GM12878 (cell line): ENCODE measurements at regions of chr6 and their contacts with region 1.

Region 1: GRCh38 chr6:2931970-2932748 is 29.1 kb upstream of the SERPINB9 start:
- DNase-seq: peak; percentile 60
- ATAC-seq: peak; percentile 99
- H3K4me3 ChIP-seq: no peak overlapping the region
- H3K27ac ChIP-seq: no peak overlapping the region
- H3K4me1 ChIP-seq: peaks cover 6% of the 10 kb centered on the region
- H3K27me3 ChIP-seq: peaks cover 0 to 4% of the 10 kb centered on the region in 2 experiments; a peak in 1 of 4 replicates
- CTCF ChIP-seq: peak; percentile 97 to 98 (median 97); a peak in 5 of 6 replicates
- EP300 ChIP-seq: no peak
- POLR2A ChIP-seq: no peak
- RAD21 ChIP-seq: peak; percentile 95

Region 2: DNA sequence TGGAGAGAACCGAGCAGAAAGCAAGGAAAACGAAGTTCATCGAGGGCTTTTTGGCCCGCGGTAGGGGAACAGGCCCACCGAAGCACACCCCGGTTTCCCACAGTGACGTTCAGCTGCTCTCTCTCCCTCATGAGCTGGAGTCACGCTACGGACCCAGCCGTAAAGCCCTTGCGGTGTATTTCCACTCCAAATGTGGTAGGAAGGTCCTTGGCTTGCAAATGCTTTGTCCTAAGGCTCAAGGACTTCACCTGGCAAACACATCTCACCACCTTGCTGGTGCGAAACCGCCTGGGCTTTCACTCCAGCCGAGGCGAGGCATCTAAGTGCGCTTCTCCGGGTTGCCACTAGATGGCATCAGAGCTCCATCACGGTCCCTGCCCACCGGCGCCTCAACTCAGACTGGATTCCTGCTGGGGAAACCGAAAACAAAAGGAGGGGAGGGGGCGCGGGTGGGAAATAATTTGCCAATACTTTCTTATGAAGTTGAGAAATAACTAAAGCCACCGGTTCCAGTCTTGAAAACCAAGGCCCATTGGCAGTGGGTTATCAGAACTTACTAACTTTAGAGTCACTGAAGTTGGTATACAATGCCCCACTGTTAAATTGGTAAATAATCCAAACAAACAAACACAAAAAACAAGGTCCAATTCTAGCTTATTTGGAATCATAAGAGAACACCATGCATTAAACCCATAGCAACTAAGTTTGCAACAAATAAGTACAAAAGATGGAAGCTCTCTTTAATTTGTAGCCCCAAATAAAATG is 1335.9 kb before region 1 on chr6:
- CTCF ChIA-PET with region 1: no interaction called
- POLR2A ChIA-PET with region 1: no interaction called
- RAD21 ChIA-PET with region 1: no interaction called
- SMC1A ChIA-PET with region 1: no interaction called
- in situ Hi-C with region 1: loop called (anchors 25 kb)
- intact Hi-C with region 1: no loop called
- DNase-seq: no peak
- ATAC-seq: peak; percentile 96
- H3K4me3 ChIP-seq: no peak overlapping the region
- H3K27ac ChIP-seq: no peak overlapping the region
- H3K4me1 ChIP-seq: no peaks in the 10 kb centered on the region
- H3K27me3 ChIP-seq: no peaks in the 10 kb centered on the region; a peak in 2 of 4 replicates
- CTCF ChIP-seq: peak; percentile 92 to 93 (median 93)
- EP300 ChIP-seq: no peak
- POLR2A ChIP-seq: no peak
- RAD21 ChIP-seq: peak; percentile 90

Region 3: GRCh38 chr6:2658788-2659187 is 273.4 kb before region 1 on chr6:
- CTCF ChIA-PET with region 1: no interaction called
- POLR2A ChIA-PET with region 1: no interaction called
- RAD21 ChIA-PET with region 1: no interaction called
- SMC1A ChIA-PET with region 1: no interaction called
- in situ Hi-C with region 1: no loop called
- intact Hi-C with region 1: no loop called
- DNase-seq: peak; percentile 40
- ATAC-seq: peak; percentile 92
- H3K4me3 ChIP-seq: no peak overlapping the region
- H3K27ac ChIP-seq: no peak overlapping the region
- H3K4me1 ChIP-seq: peaks cover 10% of the 10 kb centered on the region
- H3K27me3 ChIP-seq: no peaks in the 10 kb centered on the region
- CTCF ChIP-seq: no peak
- EP300 ChIP-seq: peak in 1 of 2 experiments; percentile 57; a peak in 1 of 4 replicates
- POLR2A ChIP-seq: no peak
- RAD21 ChIP-seq: no peak

Region 4: GRCh38 chr6:2784930-2785329 is 147.2 kb before region 1 on chr6:
- CTCF ChIA-PET with region 1: interaction called, 80 read pairs
- POLR2A ChIA-PET with region 1: no interaction called
- RAD21 ChIA-PET with region 1: interaction called, 74 read pairs
- SMC1A ChIA-PET with region 1: interaction called, 26 read pairs
- in situ Hi-C with region 1: loop called (anchors 5 kb)
- intact Hi-C with region 1: no loop called
- DNase-seq: no peak
- ATAC-seq: no peak
- H3K4me3 ChIP-seq: no peak overlapping the region
- H3K27ac ChIP-seq: no peak overlapping the region
- H3K4me1 ChIP-seq: no peaks in the 10 kb centered on the region
- H3K27me3 ChIP-seq: no peaks in the 10 kb centered on the region
- CTCF ChIP-seq: no peak
- EP300 ChIP-seq: no peak
- POLR2A ChIP-seq: no peak
- RAD21 ChIP-seq: no peak

Region 5: DNA sequence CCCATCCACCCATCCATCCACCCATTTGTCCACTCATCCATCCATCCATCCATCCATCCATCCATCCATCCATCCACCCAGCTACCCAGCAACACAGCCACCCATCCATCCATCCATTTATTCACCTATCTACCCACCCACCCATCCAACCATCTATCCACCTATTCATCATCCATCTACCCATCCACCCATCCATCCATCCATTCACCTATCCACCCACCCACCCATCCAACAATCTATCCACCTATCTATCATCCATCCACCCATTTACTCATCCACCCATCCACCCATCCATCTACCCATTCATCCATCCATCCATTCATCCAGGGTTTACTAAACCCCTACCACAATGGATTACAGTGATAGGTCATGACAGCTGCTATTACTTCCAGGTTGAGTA is 97.9 kb before region 1 on chr6:
- CTCF ChIA-PET with region 1: interaction called, 12 read pairs
- POLR2A ChIA-PET with region 1: no interaction called
- RAD21 ChIA-PET with region 1: no interaction called
- SMC1A ChIA-PET with region 1: no interaction called
- in situ Hi-C with region 1: no loop called
- intact Hi-C with region 1: no loop called
- DNase-seq: no peak
- ATAC-seq: no peak
- H3K4me3 ChIP-seq: no peak overlapping the region
- H3K27ac ChIP-seq: no peak overlapping the region
- H3K4me1 ChIP-seq: no peaks in the 10 kb centered on the region
- H3K27me3 ChIP-seq: no peaks in the 10 kb centered on the region; a peak in 2 of 4 replicates
- CTCF ChIP-seq: no peak
- EP300 ChIP-seq: no peak
- POLR2A ChIP-seq: no peak
- RAD21 ChIP-seq: no peak

Region 6: DNA sequence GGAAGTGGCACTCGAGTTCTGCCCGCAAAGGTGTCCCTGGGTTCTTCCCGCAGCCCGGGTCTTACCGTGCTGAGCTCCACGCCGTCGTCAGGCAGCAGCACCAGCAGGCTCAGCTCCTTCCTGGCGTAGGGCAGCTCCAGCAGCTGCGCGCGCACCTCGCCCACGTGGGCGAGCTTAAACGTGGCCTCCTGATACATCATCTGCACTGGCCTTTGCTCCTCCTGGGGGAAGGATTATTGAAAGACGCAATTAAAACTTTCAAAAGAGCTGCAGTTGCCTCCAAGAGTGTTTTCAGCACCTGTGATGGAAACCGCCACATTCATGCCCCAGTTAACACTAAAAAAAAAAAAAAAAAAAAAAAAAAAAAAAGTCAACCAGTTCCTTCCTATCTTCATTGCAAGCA is 40.4 kb before region 1 on chr6:
- CTCF ChIA-PET with region 1: interaction called, 6 read pairs
- POLR2A ChIA-PET with region 1: no interaction called
- RAD21 ChIA-PET with region 1: interaction called, 8 read pairs
- SMC1A ChIA-PET with region 1: interaction called, 22 read pairs
- in situ Hi-C with region 1: no loop called
- intact Hi-C with region 1: no loop called
- DNase-seq: peak; percentile 89
- ATAC-seq: peak; percentile 93
- H3K4me3 ChIP-seq: peak overlapping the region; percentile 20; the same call in 1 of the 2 replicates
- H3K27ac ChIP-seq: no peak overlapping the region
- H3K4me1 ChIP-seq: peaks cover 4% of the 10 kb centered on the region; the same call in 1 of the 2 replicates
- H3K27me3 ChIP-seq: no peaks in the 10 kb centered on the region
- CTCF ChIP-seq: no peak
- EP300 ChIP-seq: peak; percentile 18 to 76; a peak in 1 of 4 replicates
- POLR2A ChIP-seq: peak; percentile 85
- RAD21 ChIP-seq: no peak

Region 7: GRCh38 chr6:2911171-2911570 is 21.0 kb before region 1 on chr6:
- CTCF ChIA-PET with region 1: interaction called, 22 read pairs
- POLR2A ChIA-PET with region 1: no interaction called
- RAD21 ChIA-PET with region 1: interaction called, 7 read pairs
- SMC1A ChIA-PET with region 1: interaction called, 17 read pairs
- in situ Hi-C with region 1: no loop called
- intact Hi-C with region 1: no loop called
- DNase-seq: no peak
- ATAC-seq: peak; percentile 84
- H3K4me3 ChIP-seq: no peak overlapping the region
- H3K27ac ChIP-seq: no peak overlapping the region
- H3K4me1 ChIP-seq: peaks cover 13% of the 10 kb centered on the region
- H3K27me3 ChIP-seq: no peaks in the 10 kb centered on the region; a peak in 1 of 4 replicates
- CTCF ChIP-seq: no peak
- EP300 ChIP-seq: no peak
- POLR2A ChIP-seq: no peak
- RAD21 ChIP-seq: no peak

Region 8: GRCh38 chr6:2952557-2953095 is 20.5 kb after region 1 on chr6:
- CTCF ChIA-PET with region 1: interaction called, 12 read pairs
- POLR2A ChIA-PET with region 1: no interaction called
- RAD21 ChIA-PET with region 1: interaction called, 5 read pairs
- SMC1A ChIA-PET with region 1: interaction called, 4 read pairs
- in situ Hi-C with region 1: no loop called
- intact Hi-C with region 1: no loop called
- DNase-seq: no peak
- ATAC-seq: peak; percentile 99
- H3K4me3 ChIP-seq: no peak overlapping the region
- H3K27ac ChIP-seq: no peak overlapping the region
- H3K4me1 ChIP-seq: no peaks in the 10 kb centered on the region
- H3K27me3 ChIP-seq: peaks cover 4 to 6% of the 10 kb centered on the region in 2 experiments
- CTCF ChIP-seq: peak; percentile 52 to 83 (median 80)
- EP300 ChIP-seq: no peak
- POLR2A ChIP-seq: no peak
- RAD21 ChIP-seq: no peak